K562 (cell line): ENCODE measurements at regions of chr9 and their contacts with region 1.

Region 1: GRCh38 chr9:129343424-129344375 is 165.6 kb upstream of the IER5L start:
- DNase-seq: no peak
- ATAC-seq: peak; percentile 65
- H3K4me3 ChIP-seq: no peak overlapping the region
- H3K27ac ChIP-seq: no peak overlapping the region
- H3K4me1 ChIP-seq: peaks cover 0 to 22% of the 10 kb centered on the region in 2 experiments; a peak in 2 of 5 replicates
- H3K27me3 ChIP-seq: no peaks in the 10 kb centered on the region
- CTCF ChIP-seq: no peak
- EP300 ChIP-seq: no peak
- POLR2A ChIP-seq: no peak
- RAD21 ChIP-seq: no peak; a peak in 1 of 4 replicates

Region 2: DNA sequence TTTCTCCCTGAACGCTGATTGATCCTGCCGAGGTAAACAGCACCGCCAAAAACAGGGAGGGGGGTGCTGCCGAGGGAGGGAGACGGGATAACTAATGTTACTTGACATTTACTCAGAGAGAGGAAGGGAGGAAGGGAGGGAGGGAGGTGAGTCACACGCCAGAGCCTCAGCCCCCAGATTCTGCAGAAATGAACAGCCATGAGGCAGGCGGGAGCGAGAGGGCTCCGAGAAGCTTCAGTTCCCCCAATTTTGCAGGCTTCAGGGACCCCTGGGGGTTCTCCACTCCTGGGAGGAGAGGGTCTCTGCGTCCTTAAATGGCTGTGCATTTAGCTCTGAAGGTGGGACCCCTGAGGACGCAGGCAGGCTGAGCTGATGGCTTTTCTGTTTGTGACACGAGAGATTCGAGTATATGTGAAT is 106.5 kb before region 1 on chr9:
- CTCF ChIA-PET with region 1: no interaction called
- POLR2A ChIA-PET with region 1: no interaction called
- in situ Hi-C with region 1: no loop called
- intact Hi-C with region 1: no loop called
- DNase-seq: peak; percentile 46 to 79 (median 61)
- ATAC-seq: peak; percentile 91
- H3K4me3 ChIP-seq: peak overlapping the region; percentile 26; the same call in 1 of the 2 replicates
- H3K27ac ChIP-seq: peak overlapping the region; percentile 45; the same call in 1 of the 3 replicates
- H3K4me1 ChIP-seq: peaks cover 9 to 10% of the 10 kb centered on the region in 2 experiments; a peak in 4 of 5 replicates
- H3K27me3 ChIP-seq: no peaks in the 10 kb centered on the region
- CTCF ChIP-seq: no peak
- EP300 ChIP-seq: peak; percentile 39; the same call in 1 of the 2 replicates
- POLR2A ChIP-seq: no peak
- RAD21 ChIP-seq: no peak

Region 3: GRCh38 chr9:129353697-129354336 is 10.1 kb after region 1 on chr9:
- CTCF ChIA-PET with region 1: no interaction called
- POLR2A ChIA-PET with region 1: no interaction called
- in situ Hi-C with region 1: no loop called
- intact Hi-C with region 1: no loop called
- DNase-seq: no peak
- ATAC-seq: no peak
- H3K4me3 ChIP-seq: no peak overlapping the region
- H3K27ac ChIP-seq: no peak overlapping the region
- H3K4me1 ChIP-seq: peaks cover 6 to 35% of the 10 kb centered on the region in 2 experiments; a peak in 3 of 5 replicates
- H3K27me3 ChIP-seq: peaks cover 4 to 33% of the 10 kb centered on the region in 2 experiments; a peak in 3 of 5 replicates
- CTCF ChIP-seq: no peak
- EP300 ChIP-seq: no peak
- POLR2A ChIP-seq: no peak
- RAD21 ChIP-seq: no peak

Region 4: DNA sequence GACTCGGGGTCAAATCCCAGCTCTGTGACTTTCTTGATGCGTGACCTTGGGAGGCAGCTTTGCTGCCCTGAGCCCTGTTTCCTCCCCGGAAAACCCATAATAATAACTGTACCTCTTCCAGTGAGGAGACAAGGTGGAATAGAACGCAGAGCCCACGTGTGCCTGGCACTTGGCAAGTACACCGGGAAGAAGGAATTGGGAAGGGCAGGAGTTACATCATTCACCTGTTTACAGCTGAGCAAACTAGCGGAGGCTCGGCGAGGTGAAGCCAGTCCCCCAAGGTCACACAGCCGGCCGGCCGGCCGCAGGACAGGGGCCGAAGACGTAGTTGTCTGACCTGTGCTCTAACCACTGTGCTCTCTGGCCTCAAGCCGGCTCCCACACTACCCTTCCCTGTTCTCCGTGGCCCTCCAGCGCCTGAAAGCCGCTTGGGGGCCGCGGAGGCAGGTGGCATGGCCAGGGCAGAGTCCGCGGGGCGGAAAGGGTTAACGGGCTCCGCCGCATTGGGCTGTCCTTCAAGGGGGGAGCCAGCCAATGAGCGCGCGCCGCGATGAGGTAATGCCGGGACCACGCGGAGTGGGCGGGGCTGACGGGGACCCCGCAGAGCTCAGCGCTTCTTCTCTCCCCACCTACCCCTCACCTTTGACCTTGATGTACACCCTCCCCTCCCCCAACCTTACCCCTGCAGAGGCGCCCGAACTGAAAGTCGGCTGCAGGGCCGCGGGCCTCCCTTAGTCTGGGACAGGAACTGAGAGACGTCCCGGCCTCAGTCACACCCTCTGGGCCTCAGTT is 152.0 kb after region 1 on chr9:
- CTCF ChIA-PET with region 1: no interaction called
- POLR2A ChIA-PET with region 1: no interaction called
- in situ Hi-C with region 1: no loop called
- intact Hi-C with region 1: loop called (anchors 10 kb)
- DNase-seq: peak; percentile 92 to 98 (median 98)
- ATAC-seq: peak; percentile 83
- H3K4me3 ChIP-seq: peak overlapping the region; percentile 36
- H3K27ac ChIP-seq: peak overlapping the region; percentile 79
- H3K4me1 ChIP-seq: peaks cover 54 to 81% of the 10 kb centered on the region in 2 experiments
- H3K27me3 ChIP-seq: no peaks in the 10 kb centered on the region
- CTCF ChIP-seq: no peak
- EP300 ChIP-seq: no peak
- POLR2A ChIP-seq: peak; percentile 41; the same call in 1 of the 2 replicates
- RAD21 ChIP-seq: no peak

Region 5: DNA sequence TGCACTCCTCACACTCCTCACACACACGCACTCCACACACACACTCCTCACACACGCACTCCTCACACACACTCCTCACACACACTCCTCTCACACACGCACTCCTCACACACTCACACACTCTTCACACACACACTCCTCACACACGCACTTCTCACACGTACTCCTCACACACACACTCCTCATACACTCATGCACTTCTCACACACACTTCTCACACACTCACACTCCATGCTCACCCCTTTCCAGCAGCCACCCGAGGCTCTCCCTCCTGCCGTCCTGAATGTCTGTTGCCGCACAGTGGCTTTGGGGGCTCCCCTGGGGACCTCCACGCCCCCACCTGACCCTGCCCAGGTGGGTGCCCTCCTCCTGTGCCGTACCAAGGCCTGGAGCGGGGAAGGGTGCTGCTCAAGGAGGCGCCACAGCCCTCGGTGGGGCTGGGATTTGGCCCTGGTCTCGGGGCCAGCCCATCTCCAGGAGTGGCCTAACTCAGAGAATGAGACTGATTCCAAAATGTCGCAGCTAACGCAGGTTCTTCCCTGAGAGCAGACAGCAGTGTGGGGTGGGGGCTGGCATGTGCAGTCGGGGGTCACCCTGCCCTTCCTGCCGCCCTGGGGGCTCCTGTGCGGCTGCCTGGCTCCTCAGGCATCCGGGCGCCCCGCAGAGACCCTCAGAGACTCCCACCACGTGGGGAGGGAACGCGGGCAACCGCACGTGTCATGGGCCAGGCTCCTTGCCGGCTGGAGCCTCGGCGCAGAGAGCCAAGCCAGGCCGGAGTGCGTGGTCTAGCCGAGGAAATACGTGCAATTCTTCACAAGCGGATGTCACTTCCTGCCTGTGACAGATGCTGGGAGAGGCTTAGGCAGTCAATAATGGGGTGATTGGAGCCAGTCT is 232.9 kb after region 1 on chr9:
- CTCF ChIA-PET with region 1: no interaction called
- POLR2A ChIA-PET with region 1: no interaction called
- in situ Hi-C with region 1: no loop called
- intact Hi-C with region 1: no loop called
- DNase-seq: no peak
- ATAC-seq: no peak
- H3K4me3 ChIP-seq: no peak overlapping the region
- H3K27ac ChIP-seq: no peak overlapping the region
- H3K4me1 ChIP-seq: peaks cover 0 to 20% of the 10 kb centered on the region in 2 experiments; a peak in 2 of 5 replicates
- H3K27me3 ChIP-seq: no peaks in the 10 kb centered on the region
- CTCF ChIP-seq: no peak
- EP300 ChIP-seq: no peak
- POLR2A ChIP-seq: no peak
- RAD21 ChIP-seq: no peak